ENCODE measurements at regions of chr17 and their contacts with region 1.

Region 1: GRCh38 chr17:44324571-44325275 is at the start of gene SLC25A39:
- DNase-seq: peak; percentile 76 to 97
- ATAC-seq: peak; percentile 63 to 79
- H3K4me3 ChIP-seq: peak within 1 kb of the TSS; percentile 98
- H3K27ac ChIP-seq: peak within 1 kb of the TSS; percentile 93
- H3K4me1 ChIP-seq: peaks cover 17% of the 10 kb centered on the region
- CTCF ChIP-seq: no peak
- EP300 ChIP-seq: no peak
- POLR2A ChIP-seq: peak; percentile 67
- RAD21 ChIP-seq: no peak; a peak in 2 of 5 replicates
- polyA plus RNA-seq, gene SLC25A39: 80.9 and 90.1 TPM in 2 replicates

Region 2: DNA sequence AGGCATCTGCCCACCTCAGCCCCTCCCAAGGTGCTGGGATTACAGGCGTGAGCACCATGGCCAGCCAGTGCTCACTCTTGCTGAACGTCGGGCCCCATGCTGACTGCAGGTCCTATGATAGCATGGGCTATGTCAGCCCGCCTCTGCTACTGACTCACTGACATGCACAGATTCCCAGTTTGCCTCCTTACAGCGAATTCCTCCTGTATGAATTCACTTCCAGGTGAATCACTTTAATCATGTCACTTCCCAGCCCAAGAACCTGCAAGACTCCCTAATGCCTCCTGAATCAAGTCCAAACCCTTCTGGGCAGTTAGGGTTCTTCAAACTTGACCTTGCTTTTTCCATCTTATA is 89.2 kb before region 1 on chr17:
- CTCF ChIA-PET with region 1: no interaction called
- POLR2A ChIA-PET with region 1: no interaction called
- DNase-seq: peak in 1 of 2 experiments; percentile 59
- ATAC-seq: peak; percentile 86
- H3K4me3 ChIP-seq: no peak overlapping the region
- H3K27ac ChIP-seq: 0 out of 6 replicates have a peak overlapping the region, but pooled peaks of 1 of the 2 experiments have one; percentile 6
- H3K4me1 ChIP-seq: peaks cover 12% of the 10 kb centered on the region; the same call in 2 of the 3 replicates
- CTCF ChIP-seq: no peak
- EP300 ChIP-seq: no peak
- POLR2A ChIP-seq: no peak
- RAD21 ChIP-seq: no peak

Region 3: DNA sequence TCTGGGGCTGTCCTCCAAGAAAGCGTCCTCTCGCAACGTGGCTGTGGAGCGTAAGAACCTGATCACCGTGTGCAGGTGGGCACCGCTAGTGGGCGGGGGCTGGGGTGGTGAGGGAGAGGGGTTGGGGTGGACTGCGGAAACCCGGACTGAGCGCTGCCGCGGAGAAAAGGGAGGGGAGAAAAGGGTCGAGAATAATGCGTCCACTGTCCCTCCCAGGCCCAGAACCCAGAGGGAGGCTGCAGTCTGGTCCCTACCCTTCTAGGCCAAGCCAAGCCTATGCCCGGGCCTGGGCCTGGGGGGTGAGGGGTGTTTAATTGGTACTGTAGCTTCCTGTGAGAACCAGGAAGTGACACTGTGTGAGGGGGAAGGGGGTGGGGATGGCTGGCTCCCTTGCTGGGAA is 15.9 kb before region 1 on chr17:
- CTCF ChIA-PET with region 1: interaction called, 12 read pairs
- POLR2A ChIA-PET with region 1: no interaction called
- DNase-seq: no peak
- ATAC-seq: peak in 1 of 2 experiments; percentile 4; a peak in 1 of 6 replicates
- H3K4me3 ChIP-seq: no peak overlapping the region
- H3K27ac ChIP-seq: no peak overlapping the region
- H3K4me1 ChIP-seq: peaks cover 15% of the 10 kb centered on the region
- CTCF ChIP-seq: no peak
- EP300 ChIP-seq: no peak
- POLR2A ChIP-seq: no peak
- RAD21 ChIP-seq: no peak

Region 4: DNA sequence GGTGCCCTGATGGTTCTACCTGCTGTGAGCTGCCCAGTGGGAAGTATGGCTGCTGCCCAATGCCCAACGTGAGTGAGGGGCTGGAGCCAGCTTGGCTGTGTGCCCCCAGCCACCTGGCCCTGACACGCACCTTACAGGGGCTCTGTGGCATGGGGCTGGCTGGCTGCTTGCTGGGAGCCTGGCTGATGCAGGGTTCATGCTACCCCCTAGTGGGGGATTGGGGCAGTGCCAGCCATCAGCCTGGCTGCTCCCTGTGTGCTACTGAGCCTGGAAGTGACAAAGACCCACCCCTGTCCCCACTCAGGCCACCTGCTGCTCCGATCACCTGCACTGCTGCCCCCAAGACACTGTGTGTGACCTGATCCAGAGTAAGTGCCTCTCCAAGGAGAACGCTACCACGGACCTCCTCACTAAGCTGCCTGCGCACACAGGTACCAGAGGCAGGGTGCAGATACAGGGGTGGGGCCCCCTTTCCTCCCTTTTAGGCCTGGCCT is 26.1 kb after region 1 on chr17:
- CTCF ChIA-PET with region 1: interaction called, 327 read pairs
- POLR2A ChIA-PET with region 1: interaction called, 5 read pairs
- DNase-seq: peak; percentile 73 to 96
- ATAC-seq: peak; percentile 78 to 92
- H3K4me3 ChIP-seq: no peak overlapping the region
- H3K27ac ChIP-seq: no peak overlapping the region
- H3K4me1 ChIP-seq: peaks cover 6% of the 10 kb centered on the region
- CTCF ChIP-seq: peak; percentile 81
- EP300 ChIP-seq: no peak
- POLR2A ChIP-seq: no peak
- RAD21 ChIP-seq: peak; percentile 75 to 85